CD4-positive, alpha-beta memory T cell (primary cell): ENCODE measurements at regions of chr12 and their contacts with region 1.

Region 1: GRCh38 chr12:96035278-96036236 is at the start of gene LTA4H:
- DNase-seq: peak; percentile 97 to 98 (median 97)
- H3K4me3 ChIP-seq: peak within 1 kb of the TSS; percentile 95 to 98
- H3K4me3 Mint-ChIP-seq: no peak within 1 kb of the TSS
- H3K27ac ChIP-seq: peak within 1 kb of the TSS; percentile 76
- H3K27ac Mint-ChIP-seq: no peak within 1 kb of the TSS
- H3K4me1 ChIP-seq: peaks cover 23% of the 10 kb centered on the region
- H3K4me1 Mint-ChIP-seq: peaks cover 4 to 14% (median 8%) of the 10 kb centered on the region in 4 donors
- H3K27me3 ChIP-seq: no peaks in the 10 kb centered on the region
- H3K27me3 Mint-ChIP-seq: no peaks in the 10 kb centered on the region
- total RNA-seq, gene LTA4H: 57.7 to 58.2 TPM

Region 2: DNA sequence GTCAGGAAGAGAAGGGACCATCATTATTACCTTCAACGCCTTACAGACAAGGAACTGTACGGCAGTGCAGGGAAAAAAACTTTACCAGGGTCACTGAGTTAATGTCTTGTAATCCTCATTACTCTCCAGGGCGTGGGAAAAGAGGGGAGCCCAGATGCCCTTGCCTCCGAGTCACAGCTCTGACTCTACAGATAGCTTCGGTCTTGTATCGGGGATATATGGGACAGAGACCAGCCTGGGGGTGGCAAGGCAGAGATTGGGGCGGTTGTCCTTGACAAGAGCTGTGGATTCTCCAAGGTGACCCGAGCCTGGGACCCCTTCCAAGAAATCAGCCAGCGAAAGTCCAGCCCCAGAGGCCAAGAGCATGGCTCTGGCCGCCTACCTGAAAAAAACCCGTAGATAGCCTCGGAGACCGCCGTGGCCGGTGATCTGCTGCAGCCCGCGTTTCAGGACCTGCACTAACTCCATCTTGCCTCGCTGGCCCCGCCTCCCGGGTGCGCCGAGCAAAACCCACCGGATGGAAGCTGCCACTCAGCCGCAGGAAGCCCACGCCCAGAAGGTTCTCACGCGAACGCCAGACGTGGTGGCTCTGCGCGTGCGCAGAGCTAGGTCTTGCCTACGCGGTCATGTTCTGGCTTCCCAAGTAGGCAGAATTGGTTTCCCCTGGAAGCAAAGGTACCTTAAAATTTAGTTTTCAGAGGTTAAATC is 1032.2 kb before region 1 on chr12 and contains the start of gene NDUFA12:
- CTCF ChIA-PET with region 1: no interaction called
- POLR2A ChIA-PET with region 1: no interaction called
- intact Hi-C with region 1: loop called (anchors 5 kb)
- DNase-seq: peak; percentile 92 to 94 (median 93)
- H3K4me3 ChIP-seq: peak within 1 kb of the TSS; percentile 83 to 96
- H3K4me3 Mint-ChIP-seq: peak within 1 kb of the TSS; percentile 93 to 99 (median 95)
- H3K27ac ChIP-seq: peak within 1 kb of the TSS; percentile 80
- H3K27ac Mint-ChIP-seq: peak within 1 kb of the TSS; percentile 92 to 97 (median 96)
- H3K4me1 ChIP-seq: peaks cover 61% of the 10 kb centered on the region
- H3K4me1 Mint-ChIP-seq: peaks cover 32 to 55% (median 42%) of the 10 kb centered on the region in 4 donors
- H3K27me3 ChIP-seq: no peaks in the 10 kb centered on the region
- H3K27me3 Mint-ChIP-seq: no peaks in the 10 kb centered on the region
- total RNA-seq, gene NDUFA12: 55.5 to 61.5 TPM

Region 3: DNA sequence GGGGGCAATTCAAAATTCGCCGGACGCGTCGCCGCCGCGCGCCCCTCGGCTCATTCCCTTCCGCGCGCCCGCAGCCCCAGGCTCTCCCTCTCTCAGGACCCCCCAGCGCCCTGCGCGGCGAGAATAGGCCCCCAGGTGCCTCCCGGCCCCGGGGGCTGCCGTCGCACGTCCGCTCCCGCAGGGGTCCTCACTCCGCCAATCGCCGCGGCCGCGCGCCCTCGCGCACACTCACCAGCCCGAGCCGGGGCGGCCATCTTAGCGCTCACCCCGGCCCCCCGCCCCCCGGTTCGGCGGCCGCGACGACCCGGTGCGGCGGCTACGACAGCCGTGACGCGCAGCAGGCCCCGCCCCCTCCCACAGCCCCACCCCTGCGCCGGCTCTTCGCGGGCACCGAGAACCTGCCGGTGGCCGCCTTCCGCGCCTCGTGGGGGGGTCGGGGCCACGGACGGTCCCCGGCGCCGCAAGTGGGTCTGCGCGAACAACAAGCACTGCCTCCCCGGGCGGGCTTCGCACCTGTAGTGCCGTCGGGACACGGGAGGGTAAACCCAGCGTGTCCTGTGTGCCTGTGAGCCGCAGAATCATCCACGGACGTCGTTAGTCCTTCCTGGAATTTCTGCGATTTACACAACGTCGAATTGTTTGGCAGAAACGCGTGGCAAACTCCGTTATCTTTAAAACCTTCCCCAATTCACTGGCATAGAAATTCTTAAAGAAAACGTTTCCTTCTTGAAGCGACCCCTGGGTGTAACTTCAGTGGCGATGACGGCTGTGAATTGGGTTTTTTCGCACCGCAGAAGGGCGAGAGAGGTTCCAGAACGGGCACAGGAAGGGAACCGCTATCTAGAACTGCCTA is 486.8 kb before region 1 on chr12:
- CTCF ChIA-PET with region 1: no interaction called
- POLR2A ChIA-PET with region 1: no interaction called
- intact Hi-C with region 1: loop called (anchors 1 kb)
- DNase-seq: peak; percentile 66 to 73 (median 71)
- H3K4me3 ChIP-seq: peak overlapping the region in 1 of 2 donors; percentile 68
- H3K4me3 Mint-ChIP-seq: peak overlapping the region; percentile 83 to 92 (median 88)
- H3K27ac ChIP-seq: peak overlapping the region; percentile 60
- H3K27ac Mint-ChIP-seq: peak overlapping the region; percentile 45 to 93 (median 85)
- H3K4me1 ChIP-seq: peaks cover 13% of the 10 kb centered on the region
- H3K4me1 Mint-ChIP-seq: peaks cover 14 to 60% (median 27%) of the 10 kb centered on the region in 4 donors
- H3K27me3 ChIP-seq: no peaks in the 10 kb centered on the region
- H3K27me3 Mint-ChIP-seq: peaks cover 6 to 17% of the 10 kb centered on the region in 2 donors

Region 4: DNA sequence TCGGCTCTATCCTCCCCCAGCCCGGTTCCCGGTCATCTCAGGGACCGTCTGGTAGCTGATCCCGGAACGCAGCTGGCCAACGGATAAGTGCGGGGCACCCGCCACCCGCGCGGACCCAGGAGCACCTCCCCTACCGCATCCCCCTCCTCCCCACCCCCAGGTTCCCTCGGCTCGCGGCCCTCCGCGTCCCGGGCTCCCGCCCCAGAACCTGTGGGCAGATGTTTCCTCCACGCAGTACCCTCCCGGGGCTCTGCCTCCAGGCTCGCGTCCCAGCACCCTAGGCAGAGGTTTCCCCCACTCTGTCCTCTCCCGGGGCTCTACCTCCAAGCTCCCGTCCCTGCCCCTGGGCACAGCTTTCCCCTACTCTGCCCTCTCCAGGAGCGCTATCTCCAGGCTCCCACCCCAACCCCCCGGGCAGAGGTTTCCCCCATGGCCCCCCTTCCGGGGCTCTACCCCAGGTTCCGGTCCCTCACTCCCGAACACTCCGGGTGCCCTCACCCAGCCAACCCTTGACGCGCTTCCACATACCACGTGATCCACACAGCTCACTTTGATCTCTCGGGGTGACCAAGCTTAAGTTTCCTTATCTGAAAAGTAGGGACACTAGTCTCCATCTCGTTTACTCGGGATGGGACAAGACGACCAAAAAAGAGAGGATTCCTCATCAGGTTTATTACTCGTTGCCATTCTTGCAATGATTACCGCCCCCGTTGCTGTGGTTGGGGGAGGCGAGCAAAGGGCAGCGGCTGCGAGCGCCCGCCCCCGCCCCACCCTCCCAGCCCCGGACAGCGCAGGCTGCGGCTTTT is 92.8 kb before region 1 on chr12 and contains the start of gene CCDC38:
- CTCF ChIA-PET with region 1: interaction called, 3 read pairs
- POLR2A ChIA-PET with region 1: interaction called, 21 read pairs
- intact Hi-C with region 1: loop called (anchors 1 kb)
- DNase-seq: peak; percentile 79 to 87 (median 84)
- H3K4me3 ChIP-seq: peak within 1 kb of the TSS; percentile 69 to 92
- H3K4me3 Mint-ChIP-seq: peak within 1 kb of the TSS; percentile 92 to 97 (median 95)
- H3K27ac ChIP-seq: peak within 1 kb of the TSS; percentile 70
- H3K27ac Mint-ChIP-seq: peak within 1 kb of the TSS; percentile 86 to 97 (median 93)
- H3K4me1 ChIP-seq: peaks cover 12% of the 10 kb centered on the region
- H3K4me1 Mint-ChIP-seq: peaks cover 5 to 12% (median 7%) of the 10 kb centered on the region in 4 donors
- H3K27me3 ChIP-seq: no peaks in the 10 kb centered on the region
- H3K27me3 Mint-ChIP-seq: no peaks in the 10 kb centered on the region
- total RNA-seq, gene CCDC38: 0.23 to 1.0 TPM

Region 5: DNA sequence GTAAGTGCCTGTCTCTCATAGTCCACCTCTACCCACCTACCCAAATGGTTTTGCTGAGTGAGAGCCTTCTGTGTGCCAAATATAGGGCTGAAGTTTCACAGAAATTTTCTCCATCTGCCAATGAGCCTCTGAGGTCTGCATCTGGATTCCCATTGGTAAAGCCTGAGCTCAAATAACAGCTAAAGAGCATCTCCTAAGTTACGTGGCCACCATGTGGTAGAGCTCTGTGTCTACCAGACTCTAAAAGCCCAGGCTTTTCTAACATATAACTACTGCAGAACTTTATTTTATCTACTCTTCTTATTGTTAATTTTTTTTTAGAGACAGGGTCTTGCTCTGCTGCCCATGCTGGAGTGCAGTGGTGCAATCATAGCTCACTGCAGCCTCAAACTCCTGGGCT is 76.5 kb before region 1 on chr12:
- CTCF ChIA-PET with region 1: no interaction called
- POLR2A ChIA-PET with region 1: no interaction called
- intact Hi-C with region 1: no loop called
- DNase-seq: no peak
- H3K4me3 ChIP-seq: no peak overlapping the region
- H3K4me3 Mint-ChIP-seq: no peak overlapping the region
- H3K27ac ChIP-seq: no peak overlapping the region
- H3K27ac Mint-ChIP-seq: no peak overlapping the region
- H3K4me1 ChIP-seq: no peaks in the 10 kb centered on the region
- H3K4me1 Mint-ChIP-seq: no peaks in the 10 kb centered on the region
- H3K27me3 ChIP-seq: no peaks in the 10 kb centered on the region
- H3K27me3 Mint-ChIP-seq: no peaks in the 10 kb centered on the region

Region 6: GRCh38 chr12:96120359-96121100 is 85.0 kb after region 1 on chr12:
- CTCF ChIA-PET with region 1: no interaction called
- POLR2A ChIA-PET with region 1: no interaction called
- intact Hi-C with region 1: no loop called
- DNase-seq: no peak
- H3K4me3 ChIP-seq: no peak overlapping the region
- H3K4me3 Mint-ChIP-seq: no peak overlapping the region
- H3K27ac ChIP-seq: no peak overlapping the region
- H3K27ac Mint-ChIP-seq: peak overlapping the region in 1 of 7 donors; percentile 10
- H3K4me1 ChIP-seq: no peaks in the 10 kb centered on the region
- H3K4me1 Mint-ChIP-seq: peaks cover 0 to 9% (median 6%) of the 10 kb centered on the region in 4 donors
- H3K27me3 ChIP-seq: no peaks in the 10 kb centered on the region
- H3K27me3 Mint-ChIP-seq: no peaks in the 10 kb centered on the region

Region 7: GRCh38 chr12:96208801-96209549 is 173.4 kb after region 1 on chr12:
- CTCF ChIA-PET with region 1: no interaction called
- POLR2A ChIA-PET with region 1: interaction called, 11 read pairs
- intact Hi-C with region 1: no loop called
- DNase-seq: no peak
- H3K4me3 ChIP-seq: no peak overlapping the region
- H3K4me3 Mint-ChIP-seq: peak overlapping the region; percentile 57 to 96 (median 86)
- H3K27ac ChIP-seq: peak overlapping the region; percentile 62
- H3K27ac Mint-ChIP-seq: peak overlapping the region; percentile 92 to 100 (median 98)
- H3K4me1 ChIP-seq: peaks cover 100% of the 10 kb centered on the region
- H3K4me1 Mint-ChIP-seq: peaks cover 82 to 100% (median 92%) of the 10 kb centered on the region in 4 donors
- H3K27me3 ChIP-seq: no peaks in the 10 kb centered on the region
- H3K27me3 Mint-ChIP-seq: no peaks in the 10 kb centered on the region

Region 8: GRCh38 chr12:96489103-96490056 is 453.8 kb after region 1 on chr12 and contains the start of gene CFAP54:
- CTCF ChIA-PET with region 1: no interaction called
- POLR2A ChIA-PET with region 1: no interaction called
- intact Hi-C with region 1: loop called (anchors 2 kb)
- DNase-seq: peak; percentile 94 to 96 (median 95)
- H3K4me3 ChIP-seq: peak within 1 kb of the TSS; percentile 64 to 84
- H3K4me3 Mint-ChIP-seq: peak within 1 kb of the TSS; percentile 84 to 93 (median 92)
- H3K27ac ChIP-seq: peak within 1 kb of the TSS; percentile 62
- H3K27ac Mint-ChIP-seq: peak within 1 kb of the TSS; percentile 86 to 98 (median 97)
- H3K4me1 ChIP-seq: peaks cover 22% of the 10 kb centered on the region
- H3K4me1 Mint-ChIP-seq: peaks cover 19 to 31% (median 23%) of the 10 kb centered on the region in 4 donors
- H3K27me3 ChIP-seq: no peaks in the 10 kb centered on the region
- H3K27me3 Mint-ChIP-seq: no peaks in the 10 kb centered on the region
- total RNA-seq, gene CFAP54: 0.73 to 1.1 TPM

Region 9: GRCh38 chr12:96828169-96828789 is 792.7 kb after region 1 on chr12:
- CTCF ChIA-PET with region 1: no interaction called
- POLR2A ChIA-PET with region 1: no interaction called
- intact Hi-C with region 1: no loop called
- DNase-seq: no peak
- H3K4me3 ChIP-seq: no peak overlapping the region
- H3K4me3 Mint-ChIP-seq: no peak overlapping the region
- H3K27ac ChIP-seq: no peak overlapping the region
- H3K27ac Mint-ChIP-seq: no peak overlapping the region
- H3K4me1 ChIP-seq: no peaks in the 10 kb centered on the region
- H3K4me1 Mint-ChIP-seq: no peaks in the 10 kb centered on the region
- H3K27me3 ChIP-seq: no peaks in the 10 kb centered on the region
- H3K27me3 Mint-ChIP-seq: no peaks in the 10 kb centered on the region